ENCODE measurements at regions of chr6 and their contacts with region 1.

Region 1: GRCh38 chr6:87682310-87682709 is 19.7 kb downstream of the AKIRIN2 start:
- DNase-seq: no peak
- H3K4me3 ChIP-seq: no peak overlapping the region
- H3K27ac ChIP-seq: no peak overlapping the region
- H3K4me1 ChIP-seq: no peaks in the 10 kb centered on the region
- H3K27me3 ChIP-seq: no peaks in the 10 kb centered on the region
- CTCF ChIP-seq: no peak

Region 2: GRCh38 chr6:87701676-87702588 is 19.6 kb after region 1 on chr6 and contains the start of gene AKIRIN2:
- CTCF ChIA-PET with region 1: no interaction called
- POLR2A ChIA-PET with region 1: interaction called, 26 read pairs
- intact Hi-C with region 1: no loop called
- DNase-seq: peak; percentile 99
- H3K4me3 ChIP-seq: peak within 1 kb of the TSS; percentile 94
- H3K27ac ChIP-seq: peak within 1 kb of the TSS; percentile 96
- H3K4me1 ChIP-seq: peaks cover 20% of the 10 kb centered on the region
- H3K27me3 ChIP-seq: no peaks in the 10 kb centered on the region
- CTCF ChIP-seq: no peak
- total RNA-seq, gene AKIRIN2: 66.7 and 68.9 TPM in 2 replicates

Region 3: DNA sequence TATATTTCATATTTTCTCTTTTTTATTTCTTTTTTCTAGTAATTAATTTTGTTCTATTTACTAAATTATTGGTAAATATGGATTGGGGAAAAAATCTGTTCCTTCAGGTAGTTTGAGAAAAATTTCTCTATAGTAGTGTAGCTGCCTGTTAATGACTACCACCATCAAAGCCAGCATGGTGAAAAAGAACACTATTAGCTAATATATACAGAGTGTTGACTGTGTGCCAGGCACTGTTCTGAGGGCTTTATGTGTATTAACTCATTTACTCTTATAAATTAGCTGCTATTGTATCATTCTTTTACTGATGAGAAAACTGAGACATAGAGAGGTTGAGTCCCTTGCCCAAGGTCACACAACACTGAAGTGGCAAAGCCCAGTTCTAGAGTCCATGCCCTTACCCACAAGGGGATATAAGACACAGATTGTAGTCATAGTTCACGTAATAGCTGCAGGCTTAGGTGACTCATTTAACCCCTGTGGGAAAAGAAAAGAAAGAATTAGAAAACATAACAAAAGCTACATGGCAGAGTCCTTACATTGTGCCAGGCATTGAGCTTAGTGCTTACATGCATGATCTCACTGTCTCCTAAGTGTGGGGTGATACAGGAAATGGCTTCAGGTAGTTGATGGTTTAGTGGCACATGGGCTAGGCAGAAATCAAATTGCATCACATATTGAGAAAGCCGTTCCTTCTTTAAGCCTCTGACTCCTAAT is 31.9 kb after region 1 on chr6:
- CTCF ChIA-PET with region 1: interaction called, 11 read pairs
- POLR2A ChIA-PET with region 1: no interaction called
- intact Hi-C with region 1: no loop called
- DNase-seq: no peak
- H3K4me3 ChIP-seq: no peak overlapping the region
- H3K27ac ChIP-seq: no peak overlapping the region
- H3K4me1 ChIP-seq: no peaks in the 10 kb centered on the region
- H3K27me3 ChIP-seq: no peaks in the 10 kb centered on the region
- CTCF ChIP-seq: no peak

Measured in A673 (cell line).